Activated naive CD4-positive, alpha-beta T cell treated with anti-CD3 and anti-CD28 coated beads for 36 hours (primary cell): ENCODE measurements at regions of chr12 and their contacts with region 1.

Region 1: DNA sequence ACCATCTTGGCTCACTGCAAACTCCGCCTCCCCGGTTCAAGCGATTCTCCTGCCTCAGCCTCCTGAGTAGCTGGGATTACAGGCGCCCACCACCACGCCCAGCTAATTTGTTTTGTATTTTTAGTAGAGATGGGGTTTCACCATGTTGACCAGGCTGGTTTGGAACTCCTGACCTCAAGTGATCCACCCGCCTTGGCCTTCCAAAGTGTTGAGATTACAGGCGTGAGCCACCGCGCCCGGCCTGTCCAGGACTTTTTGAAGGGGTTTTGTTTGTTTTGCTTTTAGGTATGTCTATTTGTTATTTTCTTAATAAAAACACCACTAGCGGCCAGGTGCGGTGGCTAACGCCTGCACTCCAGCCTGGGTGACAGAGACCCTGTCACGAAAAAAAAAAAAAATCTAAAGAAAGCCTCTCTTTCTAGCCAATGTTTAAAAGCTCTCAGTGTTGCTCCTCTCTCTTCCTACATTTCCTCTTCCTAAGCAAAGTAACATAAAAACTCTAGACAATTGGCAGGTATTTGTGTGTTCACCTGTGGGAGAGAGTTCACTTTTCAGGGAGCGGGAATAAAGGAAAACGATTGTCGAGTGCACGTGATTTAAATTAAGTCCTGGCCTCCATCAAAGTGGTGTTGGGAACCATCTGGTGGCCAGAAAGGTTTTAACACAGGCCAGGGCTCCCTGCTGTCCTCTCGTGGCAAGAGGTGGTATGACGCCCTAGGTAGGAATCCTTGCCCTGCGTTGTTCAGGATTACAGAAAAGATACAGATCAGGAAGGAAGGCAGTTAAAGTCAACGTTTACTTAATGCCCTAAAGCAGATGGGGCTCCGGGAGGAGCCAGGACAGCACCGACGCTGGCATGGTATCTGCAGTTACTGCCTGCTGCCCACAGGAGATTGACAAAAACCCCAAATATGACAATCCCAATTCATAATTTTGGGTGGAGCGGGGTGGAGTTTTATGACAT is 36.2 kb upstream of the ATP23 start:
- DNase-seq: peak; percentile 93
- H3K4me3 Mint-ChIP-seq: peak overlapping the region; percentile 49
- H3K27ac Mint-ChIP-seq: no peak overlapping the region
- H3K4me1 Mint-ChIP-seq: peaks cover 11% of the 10 kb centered on the region
- H3K27me3 Mint-ChIP-seq: peaks cover 5% of the 10 kb centered on the region

Region 2: DNA sequence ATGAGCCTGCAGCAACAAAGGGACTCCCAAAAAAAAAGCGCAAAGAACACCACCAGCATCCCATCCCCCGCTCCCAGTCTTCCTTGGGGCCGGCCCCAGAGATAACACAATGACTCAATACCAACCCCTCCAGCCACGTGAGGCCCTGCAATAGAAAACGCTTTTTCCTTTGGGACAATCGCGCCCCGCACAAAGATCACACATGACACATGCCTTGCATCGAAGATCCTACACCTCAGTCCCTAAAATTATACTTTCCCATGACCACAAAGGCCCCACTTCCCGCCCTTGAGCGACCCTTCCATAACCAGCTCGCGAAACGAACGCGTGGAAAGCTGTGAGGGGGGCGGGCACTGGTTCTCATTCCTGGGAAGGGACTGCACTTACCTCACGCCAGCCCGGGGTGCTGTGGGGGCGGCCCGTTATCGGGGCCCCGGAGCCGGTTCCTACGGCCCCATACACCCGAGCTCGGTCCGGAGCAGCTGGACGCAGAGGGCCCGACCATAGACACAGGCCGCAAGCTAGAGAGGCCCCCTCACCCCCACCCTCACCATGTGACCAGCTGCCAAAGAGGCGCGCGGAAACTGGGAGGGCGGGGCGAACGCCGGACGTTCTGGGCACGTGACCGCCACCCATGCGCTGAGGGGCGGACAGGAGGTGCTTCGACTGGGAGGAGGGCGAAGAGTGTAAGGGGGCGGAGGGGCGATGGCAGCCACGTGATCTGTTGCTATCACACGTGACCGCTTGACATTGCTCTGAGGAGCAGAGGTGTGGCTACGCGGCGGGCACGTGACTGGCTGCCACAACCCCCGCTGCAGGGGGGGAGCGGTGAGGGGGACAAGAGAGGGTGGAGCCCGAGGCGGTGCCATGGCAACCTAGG is 153.1 kb before region 1 on chr12 and contains the start of gene CDK4:
- CTCF ChIA-PET with region 1: interaction called, 9 read pairs
- intact Hi-C with region 1: loop called (anchors 1 kb)
- DNase-seq: peak; percentile 99
- H3K4me3 Mint-ChIP-seq: peak within 1 kb of the TSS; percentile 100
- H3K27ac Mint-ChIP-seq: peak within 1 kb of the TSS; percentile 99
- H3K4me1 Mint-ChIP-seq: peaks cover 51% of the 10 kb centered on the region
- H3K27me3 Mint-ChIP-seq: no peaks in the 10 kb centered on the region
- total RNA-seq, gene CDK4: 194 to 202 TPM

Region 3: DNA sequence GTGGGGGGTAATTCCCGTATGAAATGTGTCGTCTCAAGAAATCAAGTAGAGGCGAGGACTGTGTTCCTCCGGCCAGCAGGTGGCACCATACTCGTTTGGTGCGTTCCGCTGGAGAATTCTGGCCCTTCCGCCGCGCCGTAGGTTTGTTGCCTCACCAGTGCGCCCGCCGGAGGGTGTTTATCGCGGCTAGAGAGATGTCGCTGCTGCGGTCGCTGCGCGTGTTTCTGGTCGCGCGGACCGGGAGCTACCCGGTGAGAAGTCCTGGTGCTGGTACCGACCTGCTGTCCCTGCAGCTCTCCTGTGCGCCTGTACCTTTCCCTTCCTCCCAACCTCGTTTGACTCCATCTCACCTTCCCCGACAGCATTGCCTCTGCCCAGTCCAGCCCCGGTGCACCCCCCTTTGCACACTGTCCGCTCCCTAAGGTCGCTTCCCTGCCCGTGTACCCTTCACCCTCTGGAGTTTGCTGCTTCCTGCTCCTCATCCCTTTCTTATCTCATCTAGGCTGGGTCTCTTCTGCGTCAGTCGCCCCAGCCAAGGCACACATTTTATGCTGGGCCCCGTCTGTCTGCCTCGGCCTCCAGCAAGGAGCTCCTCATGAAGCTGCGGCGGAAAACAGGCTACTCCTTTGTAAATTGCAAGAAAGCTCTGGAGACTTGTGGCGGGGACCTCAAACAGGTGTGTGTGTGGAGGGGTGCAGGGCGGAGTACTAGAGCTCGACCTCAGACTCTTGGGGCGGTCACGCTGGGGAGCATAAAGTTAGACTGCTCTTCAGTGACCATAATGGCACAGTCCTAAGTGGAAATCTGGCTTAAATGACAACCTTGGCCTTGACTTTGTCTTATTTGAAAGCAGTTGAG is 122.3 kb before region 1 on chr12 and contains the start of gene TSFM:
- CTCF ChIA-PET with region 1: interaction called, 15 read pairs
- intact Hi-C with region 1: loop called (anchors 1 kb)
- DNase-seq: peak; percentile 99
- H3K4me3 Mint-ChIP-seq: peak within 1 kb of the TSS; percentile 100
- H3K27ac Mint-ChIP-seq: peak within 1 kb of the TSS; percentile 86
- H3K4me1 Mint-ChIP-seq: peaks cover 29% of the 10 kb centered on the region
- H3K27me3 Mint-ChIP-seq: no peaks in the 10 kb centered on the region
- total RNA-seq, gene TSFM: 32.8 to 34.3 TPM

Region 4: DNA sequence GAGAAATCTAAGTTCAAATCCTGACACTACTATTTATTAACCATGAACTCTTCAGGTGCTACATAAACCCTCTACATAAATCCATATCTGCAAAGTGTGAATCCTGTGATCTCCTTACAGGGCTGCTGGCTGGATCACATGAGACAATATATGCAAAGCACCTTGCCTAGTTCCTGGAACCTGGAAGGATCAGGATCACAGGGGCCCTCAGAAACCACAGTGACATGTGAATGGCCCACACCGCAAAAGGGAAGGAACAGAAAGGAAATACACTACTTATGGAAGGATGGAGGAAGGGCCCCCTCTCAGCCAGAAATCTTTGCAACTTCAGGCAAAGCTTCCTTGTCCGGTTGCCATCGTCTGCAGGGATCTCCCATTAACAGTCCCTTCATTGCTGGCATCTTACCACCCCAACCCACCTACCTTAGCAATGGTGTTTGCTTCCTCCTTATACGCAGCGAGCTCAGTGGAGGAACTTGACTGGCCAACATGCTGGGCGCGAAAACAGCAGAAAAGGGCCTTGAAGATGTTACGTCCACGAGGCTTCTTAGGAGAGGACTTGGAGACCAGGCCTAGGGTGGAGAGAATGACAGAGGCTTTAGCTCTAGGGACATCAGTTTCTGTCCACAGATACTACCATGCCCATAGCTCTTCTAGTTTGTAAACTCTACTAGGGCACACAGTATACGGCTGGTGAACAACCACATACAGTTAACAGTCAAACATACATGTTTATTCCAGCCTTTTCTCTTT is 75.9 kb before region 1 on chr12:
- CTCF ChIA-PET with region 1: interaction called, 147 read pairs
- intact Hi-C with region 1: loop called (anchors 1 kb)
- DNase-seq: no peak
- H3K4me3 Mint-ChIP-seq: no peak overlapping the region
- H3K27ac Mint-ChIP-seq: peak overlapping the region; percentile 1
- H3K4me1 Mint-ChIP-seq: peaks cover 41% of the 10 kb centered on the region
- H3K27me3 Mint-ChIP-seq: no peaks in the 10 kb centered on the region

Region 5: GRCh38 chr12:57846577-57847319 is 58.4 kb before region 1 on chr12 and contains the start of gene CTDSP2:
- CTCF ChIA-PET with region 1: interaction called, 68 read pairs
- intact Hi-C with region 1: no loop called
- DNase-seq: peak; percentile 93
- H3K4me3 Mint-ChIP-seq: peak within 1 kb of the TSS; percentile 88
- H3K27ac Mint-ChIP-seq: peak within 1 kb of the TSS; percentile 92
- H3K4me1 Mint-ChIP-seq: peaks cover 44% of the 10 kb centered on the region
- H3K27me3 Mint-ChIP-seq: peaks cover 7% of the 10 kb centered on the region
- total RNA-seq, gene CTDSP2: 94.6 to 99.8 TPM

Region 6: GRCh38 chr12:57918147-57918546 is 13.0 kb after region 1 on chr12:
- CTCF ChIA-PET with region 1: interaction called, 10 read pairs
- intact Hi-C with region 1: no loop called
- DNase-seq: no peak
- H3K4me3 Mint-ChIP-seq: no peak overlapping the region
- H3K27ac Mint-ChIP-seq: no peak overlapping the region
- H3K4me1 Mint-ChIP-seq: no peaks in the 10 kb centered on the region
- H3K27me3 Mint-ChIP-seq: no peaks in the 10 kb centered on the region

Region 7: GRCh38 chr12:57943438-57944080 is 38.4 kb after region 1 on chr12:
- CTCF ChIA-PET with region 1: no interaction called
- intact Hi-C with region 1: no loop called
- DNase-seq: no peak
- H3K4me3 Mint-ChIP-seq: no peak overlapping the region
- H3K27ac Mint-ChIP-seq: no peak overlapping the region
- H3K4me1 Mint-ChIP-seq: peaks cover 36% of the 10 kb centered on the region
- H3K27me3 Mint-ChIP-seq: no peaks in the 10 kb centered on the region